H1 (cell line): ENCODE measurements at regions of chr17 and their contacts with region 1.

Region 1: GRCh38 chr17:45172454-45173286 is 11.0 kb downstream of the HEXIM2 start:
- DNase-seq: peak in 1 of 2 experiments; percentile 70
- H3K4me3 ChIP-seq: peak overlapping the region in 3 of 4 experiments; percentile 4 to 28 (median 10); a peak in 3 of 8 replicates
- H3K27ac ChIP-seq: peak overlapping the region; percentile 64
- H3K4me1 ChIP-seq: peaks cover 5 to 29% (median 26%) of the 10 kb centered on the region in 4 experiments
- H3K27me3 ChIP-seq: no peaks in the 10 kb centered on the region
- CTCF ChIP-seq: peak in 1 of 3 experiments; percentile 20; a peak in 1 of 4 replicates
- EP300 ChIP-seq: no peak
- POLR2A ChIP-seq: no peak
- RAD21 ChIP-seq: no peak

Region 2: DNA sequence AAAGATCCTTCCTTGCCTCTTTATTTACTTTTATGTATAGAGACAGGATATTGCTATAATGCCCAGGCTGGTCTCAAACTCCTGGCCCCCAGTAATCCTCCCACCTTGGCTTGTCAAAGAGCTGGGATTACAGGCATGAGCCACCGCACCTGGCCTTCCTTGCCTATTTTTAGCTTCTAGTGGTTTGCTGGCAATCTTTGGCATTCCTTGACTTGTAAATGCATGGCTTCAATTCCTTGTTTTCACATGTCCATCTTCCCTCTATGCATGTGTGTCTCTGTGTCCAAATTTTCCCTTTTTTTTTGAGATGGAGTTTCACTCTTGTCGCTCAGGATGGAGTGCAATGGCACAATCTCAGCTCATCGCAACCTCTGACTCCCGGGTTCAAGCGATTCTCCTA is 11.5 kb after region 1 on chr17:
- CTCF ChIA-PET with region 1: interaction called, 13 read pairs
- POLR2A ChIA-PET with region 1: interaction called, 23 read pairs
- DNase-seq: no peak
- H3K4me3 ChIP-seq: no peak overlapping the region
- H3K27ac ChIP-seq: no peak overlapping the region
- H3K4me1 ChIP-seq: peaks cover 0 to 3% (median 0%) of the 10 kb centered on the region in 4 experiments; a peak in 2 of 7 replicates
- H3K27me3 ChIP-seq: no peaks in the 10 kb centered on the region
- CTCF ChIP-seq: no peak
- EP300 ChIP-seq: no peak
- POLR2A ChIP-seq: no peak
- RAD21 ChIP-seq: no peak

Region 3: GRCh38 chr17:45190503-45191255 is 18.0 kb after region 1 on chr17:
- CTCF ChIA-PET with region 1: interaction called, 12 read pairs
- POLR2A ChIA-PET with region 1: interaction called, 37 read pairs
- DNase-seq: no peak
- H3K4me3 ChIP-seq: no peak overlapping the region
- H3K27ac ChIP-seq: no peak overlapping the region
- H3K4me1 ChIP-seq: no peaks in the 10 kb centered on the region
- H3K27me3 ChIP-seq: no peaks in the 10 kb centered on the region
- CTCF ChIP-seq: no peak
- EP300 ChIP-seq: no peak
- POLR2A ChIP-seq: no peak
- RAD21 ChIP-seq: no peak